ENCODE measurements at regions of chr6 and their contacts with region 1.

Region 1: GRCh38 chr6:163413345-163414116 is 987 bp upstream of the QKI start:
- DNase-seq: peak; percentile 87
- H3K4me3 Mint-ChIP-seq: peak overlapping the region; percentile 84
- H3K27ac Mint-ChIP-seq: peak overlapping the region; percentile 86
- H3K4me1 Mint-ChIP-seq: peaks cover 19% of the 10 kb centered on the region
- H3K27me3 Mint-ChIP-seq: no peaks in the 10 kb centered on the region

Region 2: DNA sequence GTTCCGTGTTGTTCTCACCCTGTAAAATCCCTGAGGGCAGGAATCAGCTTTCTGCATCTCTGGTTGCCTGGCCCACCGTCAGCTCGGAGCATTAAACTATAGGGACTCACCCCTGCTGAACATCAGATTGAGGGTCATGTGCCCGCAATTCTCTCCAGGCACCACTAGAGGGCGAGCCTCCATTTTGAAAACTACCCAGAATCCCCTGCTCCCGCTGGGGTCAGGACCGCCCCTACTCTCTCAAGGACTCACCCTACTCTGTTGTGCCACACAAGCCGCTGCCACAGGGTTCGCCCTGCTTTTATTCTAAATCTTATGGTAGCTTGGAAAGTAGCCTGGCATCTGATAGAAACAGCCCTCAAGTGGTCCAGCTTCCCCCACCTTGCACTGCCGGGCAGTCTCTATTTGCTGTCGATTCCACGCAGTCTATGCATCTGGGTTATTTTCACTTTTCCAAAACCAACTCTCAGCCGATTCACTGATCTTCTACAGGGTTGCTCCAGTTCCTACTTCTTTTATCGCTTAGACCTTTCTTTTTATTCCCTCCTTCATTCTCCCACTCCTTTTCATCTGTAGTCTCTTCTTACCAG is 243.1 kb before region 1 on chr6:
- CTCF ChIA-PET with region 1: no interaction called
- intact Hi-C with region 1: loop called (anchors 5 kb)
- DNase-seq: peak; percentile 33
- H3K4me3 Mint-ChIP-seq: no peak overlapping the region
- H3K27ac Mint-ChIP-seq: no peak overlapping the region
- H3K4me1 Mint-ChIP-seq: no peaks in the 10 kb centered on the region
- H3K27me3 Mint-ChIP-seq: peaks cover 7% of the 10 kb centered on the region

Region 3: GRCh38 chr6:163367497-163368183 is 45.9 kb before region 1 on chr6:
- CTCF ChIA-PET with region 1: no interaction called
- intact Hi-C with region 1: no loop called
- DNase-seq: no peak
- H3K4me3 Mint-ChIP-seq: no peak overlapping the region
- H3K27ac Mint-ChIP-seq: no peak overlapping the region
- H3K4me1 Mint-ChIP-seq: peaks cover 6% of the 10 kb centered on the region
- H3K27me3 Mint-ChIP-seq: peaks cover 4% of the 10 kb centered on the region

Region 4: GRCh38 chr6:163460307-163460782 is 46.8 kb after region 1 on chr6:
- CTCF ChIA-PET with region 1: no interaction called
- intact Hi-C with region 1: loop called (anchors 1 kb)
- DNase-seq: peak; percentile 25
- H3K4me3 Mint-ChIP-seq: peak overlapping the region; percentile 90
- H3K27ac Mint-ChIP-seq: peak overlapping the region; percentile 97
- H3K4me1 Mint-ChIP-seq: peaks cover 61% of the 10 kb centered on the region
- H3K27me3 Mint-ChIP-seq: no peaks in the 10 kb centered on the region

Region 5: GRCh38 chr6:163956571-163957407 is 543.3 kb after region 1 on chr6:
- CTCF ChIA-PET with region 1: interaction called, 3 read pairs
- intact Hi-C with region 1: loop called (anchors 1 kb)
- DNase-seq: peak; percentile 72
- H3K4me3 Mint-ChIP-seq: no peak overlapping the region
- H3K27ac Mint-ChIP-seq: no peak overlapping the region
- H3K4me1 Mint-ChIP-seq: no peaks in the 10 kb centered on the region
- H3K27me3 Mint-ChIP-seq: peaks cover 29% of the 10 kb centered on the region

Region 6: GRCh38 chr6:164927288-164928056 is 1513.9 kb after region 1 on chr6:
- CTCF ChIA-PET with region 1: no interaction called
- intact Hi-C with region 1: loop called (anchors 5 kb)
- DNase-seq: peak; percentile 61
- H3K4me3 Mint-ChIP-seq: no peak overlapping the region
- H3K27ac Mint-ChIP-seq: no peak overlapping the region
- H3K4me1 Mint-ChIP-seq: no peaks in the 10 kb centered on the region
- H3K27me3 Mint-ChIP-seq: no peaks in the 10 kb centered on the region

Measured in activated naive CD4-positive, alpha-beta T cell treated with anti-CD3 and anti-CD28 coated beads for 36 hours (primary cell).